Activated T-helper 1 cell treated with anti-CD3 and anti-CD28 coated beads, Interleukin-12 subunit alpha, Interleukin-12 subunit beta, Interleukin-2, Interleukin-4 antibody, amounts not matched to agents 30 ng/mL and 10 ng/mL and 1 ng/mL, durations not matched to agents 14 hours and 24 hours and 36 hours (primary cell): ENCODE measurements at regions of chr3 and their contacts with region 1.

Region 1: DNA sequence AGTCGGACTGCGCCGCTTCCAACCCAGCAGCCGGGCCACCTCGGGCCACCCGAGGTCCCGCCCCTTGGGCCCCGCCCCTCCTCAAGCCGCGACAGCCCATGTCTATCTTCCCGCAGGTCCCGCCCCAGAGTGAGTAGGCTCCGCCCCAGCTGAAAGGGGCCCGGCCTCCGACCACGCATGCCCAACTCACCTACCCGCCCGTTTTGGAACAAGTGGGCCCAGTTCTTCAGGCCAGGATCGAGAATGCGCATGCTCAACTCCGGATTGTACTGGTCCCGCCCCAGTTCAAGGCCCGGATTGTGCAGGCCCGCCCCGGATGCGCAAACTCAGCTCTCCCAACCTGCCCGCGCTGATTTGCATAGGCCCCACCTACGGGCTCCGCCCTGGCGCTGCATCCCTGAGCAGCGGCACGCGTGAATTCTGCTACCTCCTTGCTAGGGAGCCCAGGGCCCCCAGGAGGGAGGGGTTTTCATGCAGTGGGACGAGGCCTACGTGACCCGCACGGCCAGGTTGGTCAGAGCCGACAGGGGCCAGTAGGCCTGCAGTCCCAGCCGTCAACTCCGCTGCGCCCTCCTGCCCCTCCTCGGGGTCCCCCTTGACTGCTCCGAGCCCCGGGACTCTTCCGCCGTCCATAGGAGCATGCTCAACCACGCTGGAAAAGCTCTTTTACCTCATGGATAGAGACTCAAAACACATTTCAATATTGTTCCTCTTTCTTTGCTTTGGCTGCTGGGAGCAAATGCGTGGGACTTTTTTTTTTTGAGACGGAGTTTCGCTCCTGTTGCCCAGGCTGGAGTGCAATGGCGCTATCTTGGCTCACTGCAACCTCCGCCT is at the start of gene PFKFB4:
- DNase-seq: peak; percentile 100
- H3K4me3 Mint-ChIP-seq: peak within 1 kb of the TSS; percentile 91
- H3K27ac Mint-ChIP-seq: peak within 1 kb of the TSS; percentile 90
- H3K4me1 Mint-ChIP-seq: peaks cover 52% of the 10 kb centered on the region
- H3K27me3 Mint-ChIP-seq: no peaks in the 10 kb centered on the region
- total RNA-seq, gene PFKFB4: 11.7 and 15.5 TPM in 2 replicates

Region 2: GRCh38 chr3:48088749-48089466 is 468.1 kb before region 1 on chr3:
- intact Hi-C with region 1: loop called (anchors 10 kb)
- DNase-seq: peak; percentile 94
- H3K4me3 Mint-ChIP-seq: peak overlapping the region; percentile 97
- H3K27ac Mint-ChIP-seq: peak overlapping the region; percentile 99
- H3K4me1 Mint-ChIP-seq: peaks cover 35% of the 10 kb centered on the region
- H3K27me3 Mint-ChIP-seq: peaks cover 7% of the 10 kb centered on the region

Region 3: GRCh38 chr3:48208076-48208475 is 348.9 kb before region 1 on chr3:
- intact Hi-C with region 1: no loop called
- DNase-seq: no peak
- H3K4me3 Mint-ChIP-seq: no peak overlapping the region
- H3K27ac Mint-ChIP-seq: no peak overlapping the region
- H3K4me1 Mint-ChIP-seq: no peaks in the 10 kb centered on the region
- H3K27me3 Mint-ChIP-seq: no peaks in the 10 kb centered on the region

Region 4: DNA sequence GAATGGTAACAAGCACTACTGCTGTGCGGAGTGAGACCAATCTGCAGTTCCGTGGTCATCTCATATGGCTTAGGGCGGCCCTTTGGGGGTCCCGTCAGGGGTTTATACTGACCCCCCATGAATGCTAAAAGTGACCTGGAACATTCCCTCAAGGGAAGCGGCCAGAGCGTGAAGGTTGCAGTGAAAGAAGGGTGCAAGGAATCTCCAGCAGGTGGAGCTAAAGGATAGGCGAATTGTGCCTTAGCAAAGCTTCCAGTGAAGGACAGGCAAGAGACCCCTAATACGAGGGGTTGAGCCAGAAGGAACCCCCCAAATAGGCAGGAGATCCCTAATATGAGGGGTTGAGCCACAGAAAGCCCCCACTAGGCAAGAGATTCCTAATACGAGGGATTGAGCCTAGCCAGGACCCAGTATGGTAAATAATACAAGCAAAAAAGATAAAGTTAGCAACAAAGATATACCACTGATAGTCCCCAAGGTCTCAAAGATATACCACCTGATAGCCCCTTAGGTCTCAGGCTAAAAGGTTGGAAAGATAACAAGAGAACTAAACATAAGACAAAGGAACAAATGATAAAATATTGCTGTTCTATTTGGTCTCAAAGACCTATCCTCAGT is 283.3 kb before region 1 on chr3:
- intact Hi-C with region 1: loop called (anchors 1 kb)
- DNase-seq: peak; percentile 35
- H3K4me3 Mint-ChIP-seq: no peak overlapping the region
- H3K27ac Mint-ChIP-seq: no peak overlapping the region
- H3K4me1 Mint-ChIP-seq: peaks cover 35% of the 10 kb centered on the region
- H3K27me3 Mint-ChIP-seq: no peaks in the 10 kb centered on the region

Region 5: GRCh38 chr3:48465531-48466378 is 91.3 kb before region 1 on chr3:
- intact Hi-C with region 1: loop called (anchors 1 kb)
- DNase-seq: peak; percentile 82
- H3K4me3 Mint-ChIP-seq: peak overlapping the region; percentile 93
- H3K27ac Mint-ChIP-seq: peak overlapping the region; percentile 98
- H3K4me1 Mint-ChIP-seq: peaks cover 44% of the 10 kb centered on the region
- H3K27me3 Mint-ChIP-seq: no peaks in the 10 kb centered on the region

Region 6: DNA sequence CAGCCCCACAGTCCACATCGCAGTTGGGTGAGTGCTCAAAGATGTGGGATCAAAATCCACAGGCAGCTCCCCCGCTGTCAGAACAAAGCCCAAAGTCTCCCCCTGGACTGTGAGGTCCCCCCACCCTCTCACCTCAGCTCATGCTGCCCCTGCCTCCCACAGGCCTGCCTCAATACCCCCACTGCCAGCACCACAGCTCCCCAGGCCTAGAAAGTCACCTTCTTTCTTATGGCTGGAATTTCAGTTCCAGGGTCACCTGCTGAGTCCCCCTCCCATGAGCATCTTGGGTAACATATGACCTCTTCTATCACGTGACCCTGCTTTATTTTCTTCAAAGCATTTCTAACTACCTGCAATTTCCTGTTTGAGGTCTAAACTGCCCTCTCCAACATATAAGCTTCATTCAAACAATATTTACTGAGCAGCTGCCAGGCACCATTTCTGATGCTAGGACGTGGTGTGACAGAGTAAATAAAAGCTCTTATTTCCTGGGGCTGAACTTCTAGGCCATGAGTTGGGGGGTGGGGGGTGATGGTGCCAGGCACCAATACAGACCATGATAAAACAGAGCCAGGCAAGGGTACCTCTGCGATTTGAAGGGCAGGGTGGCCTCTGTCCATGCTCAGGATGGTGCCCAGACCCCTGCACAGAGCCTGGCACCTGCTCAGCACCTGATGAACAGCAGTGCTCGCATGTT is 67.0 kb after region 1 on chr3:
- intact Hi-C with region 1: no loop called
- DNase-seq: no peak
- H3K4me3 Mint-ChIP-seq: no peak overlapping the region
- H3K27ac Mint-ChIP-seq: no peak overlapping the region
- H3K4me1 Mint-ChIP-seq: peaks cover 13% of the 10 kb centered on the region
- H3K27me3 Mint-ChIP-seq: no peaks in the 10 kb centered on the region

Region 7: DNA sequence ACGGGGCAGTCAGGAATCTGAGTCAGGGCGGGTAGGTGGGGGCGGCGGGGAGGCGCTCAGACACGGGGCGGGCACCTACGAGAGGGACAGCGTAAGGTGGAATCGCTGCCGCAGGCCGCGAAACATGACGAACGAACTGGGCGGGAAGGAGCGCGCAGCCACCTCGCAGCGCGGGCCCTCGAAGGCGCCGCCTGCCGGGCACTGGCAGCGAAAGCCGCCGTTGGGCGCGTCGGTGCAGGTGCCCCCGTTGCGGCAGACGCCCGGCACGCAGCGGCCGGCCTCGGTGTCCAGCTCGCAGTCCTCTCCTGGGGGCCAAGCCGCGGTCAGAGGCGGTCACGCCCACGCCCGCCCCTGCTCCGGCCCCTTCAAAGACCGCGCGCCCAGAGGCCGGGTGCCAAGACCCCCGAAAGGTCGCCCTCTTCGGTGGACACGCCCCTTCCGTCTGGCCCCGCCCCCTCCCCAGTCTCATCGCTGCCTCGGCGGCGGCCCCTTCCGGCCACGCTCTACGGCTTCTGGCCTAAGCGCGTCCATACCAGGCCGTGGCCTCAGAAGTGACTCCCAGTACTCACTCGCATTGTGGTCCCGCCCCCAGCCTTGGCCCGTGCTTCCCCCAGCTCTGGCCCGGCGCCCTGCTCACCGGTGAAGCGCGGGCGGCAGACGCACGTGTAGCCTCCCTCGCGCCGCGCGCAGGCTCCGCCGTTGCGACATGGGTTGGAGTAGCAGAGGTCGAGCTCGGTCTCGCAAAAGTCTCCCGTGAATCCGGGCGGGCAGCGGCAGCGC is 99.2 kb after region 1 on chr3:
- intact Hi-C with region 1: loop called (anchors 1 kb)
- DNase-seq: peak; percentile 80
- H3K4me3 Mint-ChIP-seq: peak overlapping the region; percentile 79
- H3K27ac Mint-ChIP-seq: peak overlapping the region; percentile 89
- H3K4me1 Mint-ChIP-seq: peaks cover 7% of the 10 kb centered on the region
- H3K27me3 Mint-ChIP-seq: peaks cover 4% of the 10 kb centered on the region

Region 8: DNA sequence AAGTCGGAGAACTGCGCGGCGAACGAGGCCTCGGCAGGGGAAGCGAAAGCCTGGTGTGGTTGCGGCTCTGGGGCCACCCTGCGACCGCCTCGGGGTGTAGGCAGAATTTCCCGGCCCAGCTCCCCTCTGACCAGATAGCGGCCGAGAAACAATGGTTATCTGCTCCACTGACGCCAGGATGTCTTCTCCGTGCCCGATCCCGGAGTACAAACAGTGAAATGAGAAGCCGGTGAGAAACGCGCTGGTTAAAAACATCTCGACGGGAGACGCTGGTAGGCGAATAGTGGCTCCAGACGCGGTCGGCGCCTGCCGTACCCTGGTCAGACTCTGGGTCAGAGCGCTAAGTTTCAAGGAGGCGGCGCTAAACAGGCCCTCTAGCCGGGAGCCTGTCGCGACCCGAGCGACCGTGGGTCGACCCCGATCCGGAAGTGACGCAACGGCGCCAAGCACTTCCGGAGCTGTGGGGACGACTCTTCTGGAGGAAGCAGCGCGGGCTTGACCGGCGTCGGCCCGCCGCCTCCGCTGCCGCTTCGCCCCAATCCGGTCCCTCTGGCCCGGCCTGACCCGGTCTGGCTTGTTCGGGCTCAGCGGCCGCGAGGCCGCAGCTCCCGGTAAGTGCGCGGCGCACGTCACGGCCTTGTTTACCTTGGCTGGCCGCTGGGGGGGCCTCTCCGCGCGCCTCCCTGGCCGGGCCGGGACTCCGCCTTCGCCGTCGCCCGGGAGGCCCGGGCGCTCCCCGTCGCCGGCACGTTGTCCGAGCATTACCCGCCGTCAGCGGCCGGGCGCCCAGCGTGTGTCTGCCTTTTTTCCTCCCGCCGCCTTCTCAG is 361.6 kb after region 1 on chr3 and contains the start of gene ARIH2:
- intact Hi-C with region 1: loop called (anchors 1 kb)
- DNase-seq: peak; percentile 87
- H3K4me3 Mint-ChIP-seq: peak within 1 kb of the TSS; percentile 92
- H3K27ac Mint-ChIP-seq: peak within 1 kb of the TSS; percentile 97
- H3K4me1 Mint-ChIP-seq: peaks cover 14% of the 10 kb centered on the region
- H3K27me3 Mint-ChIP-seq: no peaks in the 10 kb centered on the region
- total RNA-seq, gene ARIH2: 179 and 180 TPM in 2 replicates